ENCODE measurements at regions of chr17 and their contacts with region 1.

Region 1: GRCh38 chr17:5031365-5032082 is 3.7 kb downstream of the SLC52A1 start:
- DNase-seq: peak; percentile 88
- H3K4me3 Mint-ChIP-seq: peak overlapping the region; percentile 79
- H3K27ac Mint-ChIP-seq: peak overlapping the region; percentile 93
- H3K4me1 Mint-ChIP-seq: peaks cover 17% of the 10 kb centered on the region
- H3K27me3 Mint-ChIP-seq: no peaks in the 10 kb centered on the region

Region 2: GRCh38 chr17:4858882-4859260 is 172.7 kb before region 1 on chr17:
- CTCF ChIA-PET with region 1: no interaction called
- POLR2A ChIA-PET with region 1: no interaction called
- DNase-seq: no peak
- H3K4me3 Mint-ChIP-seq: no peak overlapping the region
- H3K27ac Mint-ChIP-seq: no peak overlapping the region
- H3K4me1 Mint-ChIP-seq: peaks cover 8% of the 10 kb centered on the region
- H3K27me3 Mint-ChIP-seq: no peaks in the 10 kb centered on the region

Region 3: DNA sequence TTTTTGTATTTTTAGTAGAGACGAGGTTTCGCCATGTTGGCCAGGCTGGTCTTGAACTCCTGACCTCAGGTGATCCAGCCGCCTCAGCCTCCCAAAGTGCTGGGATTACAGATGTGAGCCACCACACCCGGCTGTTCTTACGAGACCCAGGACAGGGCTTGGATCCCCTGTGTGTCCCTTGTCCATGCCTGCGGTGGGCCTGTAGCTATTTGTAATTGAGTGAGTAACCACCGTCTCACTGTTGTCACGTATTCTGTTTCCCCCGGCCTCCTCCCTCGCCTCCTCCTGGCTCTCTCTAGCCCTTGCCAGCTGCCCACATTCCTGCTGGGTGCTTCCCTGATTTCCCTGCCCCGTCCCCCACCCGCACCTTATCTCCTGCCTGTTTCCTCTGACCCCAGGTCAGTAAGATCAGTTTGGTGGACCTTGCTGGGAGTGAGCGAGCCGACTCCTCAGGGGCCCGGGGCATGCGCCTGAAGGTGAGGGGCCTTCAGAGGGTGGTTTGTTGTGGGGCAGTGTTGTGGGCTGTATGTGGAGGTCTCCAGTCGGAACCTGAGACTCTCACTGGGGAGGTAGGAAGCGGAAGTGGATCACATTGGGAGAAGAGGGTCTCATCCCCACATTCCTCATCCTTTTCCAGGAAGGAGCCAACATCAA is 28.2 kb before region 1 on chr17:
- CTCF ChIA-PET with region 1: no interaction called
- POLR2A ChIA-PET with region 1: no interaction called
- DNase-seq: no peak
- H3K4me3 Mint-ChIP-seq: no peak overlapping the region
- H3K27ac Mint-ChIP-seq: no peak overlapping the region
- H3K4me1 Mint-ChIP-seq: peaks cover 15% of the 10 kb centered on the region
- H3K27me3 Mint-ChIP-seq: no peaks in the 10 kb centered on the region

Region 4: GRCh38 chr17:5042157-5043022 is 10.9 kb after region 1 on chr17:
- CTCF ChIA-PET with region 1: interaction called, 10 read pairs
- POLR2A ChIA-PET with region 1: interaction called, 12 read pairs
- DNase-seq: peak; percentile 56
- H3K4me3 Mint-ChIP-seq: peak overlapping the region; percentile 85
- H3K27ac Mint-ChIP-seq: peak overlapping the region; percentile 93
- H3K4me1 Mint-ChIP-seq: peaks cover 53% of the 10 kb centered on the region
- H3K27me3 Mint-ChIP-seq: no peaks in the 10 kb centered on the region

Region 5: GRCh38 chr17:5049314-5049895 is 17.9 kb after region 1 on chr17:
- CTCF ChIA-PET with region 1: interaction called, 16 read pairs
- POLR2A ChIA-PET with region 1: interaction called, 7 read pairs
- DNase-seq: peak; percentile 80
- H3K4me3 Mint-ChIP-seq: no peak overlapping the region
- H3K27ac Mint-ChIP-seq: peak overlapping the region; percentile 76
- H3K4me1 Mint-ChIP-seq: peaks cover 51% of the 10 kb centered on the region
- H3K27me3 Mint-ChIP-seq: no peaks in the 10 kb centered on the region

Region 6: GRCh38 chr17:5055543-5055942 is 24.0 kb after region 1 on chr17:
- CTCF ChIA-PET with region 1: interaction called, 67 read pairs
- POLR2A ChIA-PET with region 1: interaction called, 3 read pairs
- DNase-seq: no peak
- H3K4me3 Mint-ChIP-seq: no peak overlapping the region
- H3K27ac Mint-ChIP-seq: no peak overlapping the region
- H3K4me1 Mint-ChIP-seq: peaks cover 2% of the 10 kb centered on the region
- H3K27me3 Mint-ChIP-seq: no peaks in the 10 kb centered on the region

Region 7: GRCh38 chr17:5065227-5065744 is 33.8 kb after region 1 on chr17:
- CTCF ChIA-PET with region 1: interaction called, 67 read pairs
- POLR2A ChIA-PET with region 1: interaction called, 4 read pairs
- DNase-seq: no peak
- H3K4me3 Mint-ChIP-seq: no peak overlapping the region
- H3K27ac Mint-ChIP-seq: no peak overlapping the region
- H3K4me1 Mint-ChIP-seq: peaks cover 8% of the 10 kb centered on the region
- H3K27me3 Mint-ChIP-seq: no peaks in the 10 kb centered on the region